Naive thymus-derived CD4-positive, alpha-beta T cell (primary cell): ENCODE measurements at regions of chr1 and their contacts with region 1.

Region 1: GRCh38 chr1:31020007-31020790 is 45.3 kb downstream of the PUM1 start:
- DNase-seq: no peak
- ATAC-seq: no peak
- H3K4me3 ChIP-seq: no peak overlapping the region
- H3K4me3 Mint-ChIP-seq: peak overlapping the region in 8 of 10 donors; percentile 34 to 74 (median 54)
- H3K27ac ChIP-seq: no peak overlapping the region
- H3K27ac Mint-ChIP-seq: peak overlapping the region in 7 of 9 donors; percentile 22 to 72 (median 50)
- H3K4me1 ChIP-seq: peaks cover 23 to 38% of the 10 kb centered on the region in 2 donors
- H3K4me1 Mint-ChIP-seq: peaks cover 54 to 88% (median 80%) of the 10 kb centered on the region in 7 donors
- H3K27me3 ChIP-seq: no peaks in the 10 kb centered on the region
- H3K27me3 Mint-ChIP-seq: no peaks in the 10 kb centered on the region

Region 2: DNA sequence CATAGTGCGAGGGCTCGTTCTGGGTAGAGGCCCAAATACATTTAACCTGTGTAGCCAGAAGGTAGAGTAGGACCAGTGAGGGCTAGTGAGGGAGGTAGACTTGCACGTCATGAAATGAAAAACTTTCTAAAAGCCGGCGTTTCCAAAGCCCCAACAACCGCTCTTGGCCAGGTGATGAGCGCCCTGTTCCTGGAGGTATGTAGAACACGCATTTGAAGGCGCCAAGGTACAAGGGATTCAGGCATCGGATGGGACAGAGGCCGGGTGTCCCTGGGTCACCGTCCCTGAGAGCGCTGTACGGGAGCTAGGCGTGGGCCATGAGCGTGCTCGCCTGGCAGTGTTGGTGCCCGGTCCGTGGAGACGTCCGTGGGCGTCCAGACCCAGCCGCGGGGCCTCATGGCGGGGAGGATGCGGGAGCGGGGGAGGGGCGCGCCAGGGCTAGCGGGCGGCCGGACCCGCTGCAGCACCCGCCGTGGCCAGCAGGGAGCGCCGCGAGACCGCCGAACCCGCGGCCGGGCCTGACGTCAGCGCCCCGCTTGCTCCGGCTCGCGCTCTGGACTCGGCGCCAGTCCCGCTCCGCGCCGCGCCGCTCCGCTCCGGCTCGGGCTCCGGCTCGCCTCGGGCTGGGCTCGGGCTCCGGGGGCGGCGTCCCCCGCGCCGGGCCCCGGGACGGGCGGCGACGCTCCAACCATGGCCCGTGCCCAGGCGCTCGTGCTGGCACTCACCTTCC is 1784.1 kb before region 1 on chr1 and contains the start of gene PTPRU:
- CTCF ChIA-PET with region 1: no interaction called
- POLR2A ChIA-PET with region 1: no interaction called
- intact Hi-C with region 1: no loop called
- DNase-seq: peak; percentile 50 to 96 (median 78)
- ATAC-seq: peak; percentile 96
- H3K4me3 ChIP-seq: peak within 1 kb of the TSS; percentile 14
- H3K4me3 Mint-ChIP-seq: peak within 1 kb of the TSS; percentile 79 to 97 (median 86)
- H3K27ac ChIP-seq: no peak within 1 kb of the TSS
- H3K27ac Mint-ChIP-seq: peak within 1 kb of the TSS in 6 of 9 donors; percentile 0 to 80 (median 25)
- H3K4me1 ChIP-seq: peaks cover 7 to 17% of the 10 kb centered on the region in 2 donors
- H3K4me1 Mint-ChIP-seq: peaks cover 19 to 29% (median 28%) of the 10 kb centered on the region in 7 donors
- H3K27me3 ChIP-seq: peaks cover 12 to 14% of the 10 kb centered on the region in 2 donors
- H3K27me3 Mint-ChIP-seq: peaks cover 34 to 66% (median 50%) of the 10 kb centered on the region in 5 donors
- total RNA-seq, gene PTPRU: 0.17 to 0.42 TPM in 2 of 5 experiments, not detected in the others

Region 3: GRCh38 chr1:30664103-30664755 is 356.0 kb before region 1 on chr1:
- CTCF ChIA-PET with region 1: no interaction called
- POLR2A ChIA-PET with region 1: no interaction called
- intact Hi-C with region 1: no loop called
- DNase-seq: no peak
- ATAC-seq: no peak
- H3K4me3 ChIP-seq: no peak overlapping the region
- H3K4me3 Mint-ChIP-seq: no peak overlapping the region
- H3K27ac ChIP-seq: no peak overlapping the region
- H3K27ac Mint-ChIP-seq: no peak overlapping the region
- H3K4me1 ChIP-seq: no peaks in the 10 kb centered on the region
- H3K4me1 Mint-ChIP-seq: peaks cover 0 to 4% (median 0%) of the 10 kb centered on the region in 7 donors
- H3K27me3 ChIP-seq: no peaks in the 10 kb centered on the region
- H3K27me3 Mint-ChIP-seq: peaks cover 0 to 4% (median 0%) of the 10 kb centered on the region in 5 donors

Region 4: GRCh38 chr1:30919025-30919881 is 100.9 kb before region 1 on chr1:
- CTCF ChIA-PET with region 1: no interaction called
- POLR2A ChIA-PET with region 1: no interaction called
- intact Hi-C with region 1: no loop called
- DNase-seq: no peak
- ATAC-seq: peak; percentile 54
- H3K4me3 ChIP-seq: no peak overlapping the region
- H3K4me3 Mint-ChIP-seq: no peak overlapping the region
- H3K27ac ChIP-seq: no peak overlapping the region
- H3K27ac Mint-ChIP-seq: no peak overlapping the region
- H3K4me1 ChIP-seq: no peaks in the 10 kb centered on the region
- H3K4me1 Mint-ChIP-seq: peaks cover 0 to 6% (median 0%) of the 10 kb centered on the region in 7 donors
- H3K27me3 ChIP-seq: peaks cover 0 to 3% of the 10 kb centered on the region in 2 donors
- H3K27me3 Mint-ChIP-seq: peaks cover 0 to 20% (median 0%) of the 10 kb centered on the region in 5 donors

Region 5: GRCh38 chr1:30986755-30987154 is 33.4 kb before region 1 on chr1:
- CTCF ChIA-PET with region 1: no interaction called
- POLR2A ChIA-PET with region 1: no interaction called
- intact Hi-C with region 1: loop called in 1 of 2 experiments (anchors 5 kb)
- DNase-seq: no peak
- ATAC-seq: no peak
- H3K4me3 ChIP-seq: no peak overlapping the region
- H3K4me3 Mint-ChIP-seq: no peak overlapping the region
- H3K27ac ChIP-seq: no peak overlapping the region
- H3K27ac Mint-ChIP-seq: peak overlapping the region in 2 of 9 donors; percentile 2 to 6
- H3K4me1 ChIP-seq: no peaks in the 10 kb centered on the region
- H3K4me1 Mint-ChIP-seq: peaks cover 34 to 82% (median 75%) of the 10 kb centered on the region in 7 donors
- H3K27me3 ChIP-seq: no peaks in the 10 kb centered on the region
- H3K27me3 Mint-ChIP-seq: no peaks in the 10 kb centered on the region

Region 6: DNA sequence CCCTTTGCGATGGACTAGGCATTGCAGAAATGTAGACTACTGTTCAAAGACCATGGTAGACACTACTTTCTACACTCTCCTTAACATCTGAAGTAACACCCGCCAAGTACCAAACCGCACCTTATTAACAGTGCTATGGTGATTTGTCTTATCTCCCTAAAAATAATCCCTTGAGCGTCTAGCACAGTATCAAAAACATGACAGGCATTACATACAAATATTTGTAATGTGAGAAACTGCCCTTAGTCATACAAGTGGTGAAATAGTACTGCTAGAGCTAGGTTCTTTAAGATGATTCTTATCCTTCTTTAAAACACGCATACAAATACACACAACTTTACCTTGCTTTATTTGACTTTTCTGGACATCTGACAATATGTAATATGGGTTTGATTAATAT is 18.2 kb after region 1 on chr1:
- CTCF ChIA-PET with region 1: no interaction called
- POLR2A ChIA-PET with region 1: no interaction called
- intact Hi-C with region 1: loop called in 1 of 2 experiments (anchors 2 kb)
- DNase-seq: no peak
- ATAC-seq: no peak
- H3K4me3 ChIP-seq: no peak overlapping the region
- H3K4me3 Mint-ChIP-seq: peak overlapping the region in 3 of 10 donors; percentile 5 to 12 (median 9)
- H3K27ac ChIP-seq: no peak overlapping the region
- H3K27ac Mint-ChIP-seq: no peak overlapping the region
- H3K4me1 ChIP-seq: peaks cover 10 to 16% of the 10 kb centered on the region in 2 donors
- H3K4me1 Mint-ChIP-seq: peaks cover 42 to 82% (median 67%) of the 10 kb centered on the region in 7 donors
- H3K27me3 ChIP-seq: no peaks in the 10 kb centered on the region
- H3K27me3 Mint-ChIP-seq: no peaks in the 10 kb centered on the region